ENCODE measurements at regions of chr1 and their contacts with region 1.

Region 1: GRCh38 chr1:227787513-227788270 is 27.8 kb upstream of the PRSS38 start:
- DNase-seq: peak; percentile 85 to 96
- H3K4me3 ChIP-seq: peak overlapping the region; percentile 65 to 75
- H3K27ac ChIP-seq: peak overlapping the region; percentile 69 to 72
- H3K4me1 ChIP-seq: peaks cover 3 to 14% of the 10 kb centered on the region in 2 donors
- H3K27me3 ChIP-seq: no peaks in the 10 kb centered on the region
- CTCF ChIP-seq: no peak

Region 2: GRCh38 chr1:227635591-227635990 is 152.1 kb before region 1 on chr1:
- intact Hi-C with region 1: no loop called
- DNase-seq: no peak
- H3K4me3 ChIP-seq: no peak overlapping the region
- H3K27ac ChIP-seq: no peak overlapping the region
- H3K4me1 ChIP-seq: no peaks in the 10 kb centered on the region
- H3K27me3 ChIP-seq: no peaks in the 10 kb centered on the region
- CTCF ChIP-seq: no peak

Region 3: DNA sequence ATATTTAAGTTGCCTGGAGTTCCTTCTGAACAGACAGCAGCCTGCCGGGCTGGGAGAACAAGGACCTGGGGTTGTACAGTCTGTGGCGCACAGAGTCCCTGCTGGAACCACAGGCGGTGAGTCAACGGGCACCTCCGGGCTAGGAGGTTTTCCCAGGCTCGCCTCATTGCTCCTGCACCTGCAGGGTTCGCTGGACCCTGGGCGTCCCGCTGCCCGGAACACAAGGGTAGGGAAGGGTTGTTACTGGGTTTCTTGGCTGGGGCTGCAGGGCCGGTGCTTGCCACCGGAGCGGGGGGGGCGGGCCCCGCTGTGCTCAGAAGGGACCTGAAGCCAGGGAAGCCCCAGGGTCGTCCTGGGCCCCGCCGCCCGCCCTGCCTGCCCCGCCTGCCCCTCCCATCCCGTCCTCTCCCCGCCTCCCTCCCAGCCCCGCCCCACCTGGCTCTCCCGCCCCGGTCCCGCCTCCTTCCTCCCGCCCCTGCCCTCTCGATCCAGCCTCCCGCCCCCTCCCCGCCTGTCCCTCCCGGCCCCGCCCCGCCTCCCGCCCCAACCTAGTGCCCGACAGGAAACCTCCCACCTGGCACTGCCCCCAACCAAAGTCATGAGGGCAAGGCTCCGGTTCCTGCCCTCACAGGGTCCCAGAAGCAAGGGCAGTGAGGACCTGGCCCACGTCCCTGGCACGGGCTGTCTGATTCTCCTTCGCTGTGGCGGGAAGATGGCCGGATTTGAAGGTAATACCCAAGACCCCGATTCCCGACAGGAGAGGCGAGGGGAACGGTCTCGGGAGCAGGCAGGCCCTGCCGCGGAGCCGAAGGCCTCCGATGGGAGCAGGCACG is 59.4 kb before region 1 on chr1:
- intact Hi-C with region 1: loop called (anchors 1 kb)
- DNase-seq: peak in 1 of 2 donors; percentile 83
- H3K4me3 ChIP-seq: peak overlapping the region; percentile 51 to 71
- H3K27ac ChIP-seq: peak overlapping the region; percentile 67 to 73
- H3K4me1 ChIP-seq: peaks cover 0 to 3% of the 10 kb centered on the region in 2 donors
- H3K27me3 ChIP-seq: no peaks in the 10 kb centered on the region
- CTCF ChIP-seq: no peak

Region 4: GRCh38 chr1:227762233-227762911 is 25.3 kb before region 1 on chr1:
- intact Hi-C with region 1: loop called (anchors 2 kb)
- DNase-seq: peak in 1 of 2 donors; percentile 90
- H3K4me3 ChIP-seq: no peak overlapping the region
- H3K27ac ChIP-seq: no peak overlapping the region
- H3K4me1 ChIP-seq: peaks cover 0 to 3% of the 10 kb centered on the region in 2 donors
- H3K27me3 ChIP-seq: no peaks in the 10 kb centered on the region
- CTCF ChIP-seq: peak; percentile 65 to 89 (median 88)

Region 5: DNA sequence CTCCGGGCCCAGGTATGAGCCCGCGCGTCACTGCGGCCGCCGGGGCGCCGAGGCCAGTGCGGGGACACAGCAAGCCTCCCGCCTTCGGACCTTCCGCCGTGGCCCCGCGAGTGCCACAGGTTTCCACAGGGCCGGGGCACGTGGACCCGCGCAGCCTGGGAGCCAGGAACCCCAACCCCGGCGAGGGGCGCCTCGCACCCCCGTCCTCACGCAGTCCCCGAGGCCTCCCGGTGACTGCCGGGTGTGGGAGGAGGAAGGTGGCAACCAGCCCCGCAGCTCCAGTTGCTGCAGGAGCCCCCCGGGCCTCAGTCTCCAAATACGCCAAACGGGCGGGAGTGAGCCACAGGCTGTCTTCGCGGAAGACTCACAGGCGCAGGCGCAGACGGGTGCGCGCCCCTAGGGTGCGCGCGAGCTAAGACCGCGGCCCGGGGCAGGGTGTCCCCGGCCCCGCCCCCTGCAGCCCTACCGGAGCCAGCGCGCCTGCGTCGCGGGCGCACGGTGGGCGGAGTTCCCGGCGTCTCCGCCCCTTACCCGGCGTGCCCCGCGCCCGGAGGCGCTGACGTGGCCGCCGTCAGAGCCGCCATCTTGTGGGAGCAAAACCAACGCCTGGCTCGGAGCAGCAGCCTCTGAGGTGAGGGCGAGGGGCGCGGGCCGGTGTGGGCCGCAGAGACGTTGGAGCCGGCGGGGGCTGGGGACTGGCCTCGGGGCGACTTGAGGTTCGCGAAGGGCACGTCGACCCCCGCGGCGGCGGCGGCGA is 294.6 kb after region 1 on chr1 and contains the start of gene ARF1:
- intact Hi-C with region 1: loop called (anchors 2 kb)
- DNase-seq: peak; percentile 70 to 93
- H3K4me3 ChIP-seq: peak within 1 kb of the TSS; percentile 97 to 100
- H3K27ac ChIP-seq: peak within 1 kb of the TSS; percentile 99 to 100
- H3K4me1 ChIP-seq: peaks cover 29 to 35% of the 10 kb centered on the region in 2 donors
- H3K27me3 ChIP-seq: no peaks in the 10 kb centered on the region
- CTCF ChIP-seq: no peak
- total RNA-seq, gene ARF1: 447 TPM

Region 6: GRCh38 chr1:228165372-228166169 is 377.9 kb after region 1 on chr1 and contains the start of gene IBA57:
- intact Hi-C with region 1: loop called (anchors 1 kb)
- DNase-seq: peak; percentile 96 to 99
- H3K4me3 ChIP-seq: peak within 1 kb of the TSS; percentile 80 to 91
- H3K27ac ChIP-seq: peak within 1 kb of the TSS; percentile 94 to 98
- H3K4me1 ChIP-seq: peaks cover 0 to 11% of the 10 kb centered on the region in 2 donors
- H3K27me3 ChIP-seq: no peaks in the 10 kb centered on the region
- CTCF ChIP-seq: peak; percentile 84 to 97 (median 87)
- total RNA-seq, gene IBA57: 55.6 TPM